IMR-90 (cell line): ENCODE measurements at regions of chr2 and their contacts with region 1.

Region 1: GRCh38 chr2:72887754-72888437 is 688 bp downstream of the SPR start:
- DNase-seq: peak; percentile 84
- ATAC-seq: peak; percentile 78
- H3K4me3 ChIP-seq: peak overlapping the region; percentile 62
- H3K27ac ChIP-seq: peak overlapping the region; percentile 31; the same call in 1 of the 2 replicates
- H3K4me1 ChIP-seq: peaks cover 3% of the 10 kb centered on the region; the same call in 1 of the 2 replicates
- H3K27me3 ChIP-seq: no peaks in the 10 kb centered on the region
- CTCF ChIP-seq: peak; percentile 96
- POLR2A ChIP-seq: no peak
- RAD21 ChIP-seq: peak; percentile 54

Region 2: GRCh38 chr2:71018625-71019024 is 1869.3 kb before region 1 on chr2:
- CTCF ChIA-PET with region 1: no interaction called
- POLR2A ChIA-PET with region 1: no interaction called
- dilution Hi-C with region 1: no loop called
- in situ Hi-C with region 1: no loop called
- intact Hi-C with region 1: no loop called
- DNase-seq: no peak
- ATAC-seq: no peak
- H3K4me3 ChIP-seq: no peak overlapping the region
- H3K27ac ChIP-seq: no peak overlapping the region
- H3K4me1 ChIP-seq: no peaks in the 10 kb centered on the region
- H3K27me3 ChIP-seq: no peaks in the 10 kb centered on the region
- CTCF ChIP-seq: no peak
- POLR2A ChIP-seq: no peak
- RAD21 ChIP-seq: no peak

Region 3: DNA sequence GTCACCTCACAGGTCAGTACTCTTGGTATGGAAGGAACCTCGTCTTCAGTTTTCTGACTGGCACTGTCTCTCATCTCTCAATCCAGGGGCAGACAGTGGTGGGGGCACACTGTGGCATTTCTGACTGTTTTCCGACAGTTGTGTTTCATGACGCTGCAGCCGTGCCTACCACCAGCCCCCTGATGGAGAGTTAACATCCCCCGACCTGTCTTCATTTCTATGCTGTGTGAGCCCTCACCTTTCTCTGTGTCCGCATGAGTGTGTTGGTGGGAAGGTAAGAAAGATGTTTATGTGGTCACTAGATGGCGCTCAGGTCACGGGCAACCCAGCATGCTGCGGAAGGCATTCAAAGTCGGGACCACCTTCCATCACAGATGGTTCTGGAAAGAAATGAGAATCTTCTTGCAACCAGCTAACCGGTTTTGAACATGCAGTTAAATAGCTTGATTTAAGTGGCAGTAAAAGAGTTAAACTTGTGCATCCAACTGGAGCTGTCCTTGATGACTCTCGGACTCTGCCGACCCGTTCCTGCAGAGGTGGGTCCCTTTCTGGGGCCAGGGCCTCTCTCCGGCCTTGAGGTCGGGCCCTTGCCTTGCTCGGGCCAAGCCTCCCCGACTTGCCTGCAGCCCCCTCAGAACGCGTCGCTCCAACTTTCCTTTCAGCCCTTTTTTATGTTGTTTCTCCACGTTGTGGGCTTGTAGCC is 1342.2 kb before region 1 on chr2:
- CTCF ChIA-PET with region 1: interaction called, 3 read pairs
- POLR2A ChIA-PET with region 1: no interaction called
- dilution Hi-C with region 1: no loop called
- in situ Hi-C with region 1: loop called (anchors 25 kb)
- intact Hi-C with region 1: no loop called
- DNase-seq: peak; percentile 55
- ATAC-seq: peak; percentile 79
- H3K4me3 ChIP-seq: no peak overlapping the region
- H3K27ac ChIP-seq: no peak overlapping the region
- H3K4me1 ChIP-seq: no peaks in the 10 kb centered on the region
- H3K27me3 ChIP-seq: peaks cover 24% of the 10 kb centered on the region
- CTCF ChIP-seq: peak; percentile 82
- POLR2A ChIP-seq: no peak
- RAD21 ChIP-seq: peak; percentile 83

Region 4: GRCh38 chr2:72825241-72826155 is 62.4 kb before region 1 on chr2 and contains the start of gene EXOC6B:
- CTCF ChIA-PET with region 1: no interaction called
- POLR2A ChIA-PET with region 1: interaction called, 12 read pairs
- dilution Hi-C with region 1: no loop called
- in situ Hi-C with region 1: no loop called
- intact Hi-C with region 1: no loop called
- DNase-seq: peak; percentile 85
- ATAC-seq: peak; percentile 90
- H3K4me3 ChIP-seq: peak within 1 kb of the TSS; percentile 85
- H3K27ac ChIP-seq: peak within 1 kb of the TSS; percentile 74
- H3K4me1 ChIP-seq: peaks cover 12% of the 10 kb centered on the region
- H3K27me3 ChIP-seq: no peaks in the 10 kb centered on the region
- CTCF ChIP-seq: no peak
- POLR2A ChIP-seq: peak; percentile 71
- RAD21 ChIP-seq: no peak
- total RNA-seq, gene EXOC6B: 29.4 and 29.7 TPM in 2 replicates

Region 5: GRCh38 chr2:73071360-73072133 is 183.7 kb after region 1 on chr2 and contains the start of gene SFXN5:
- CTCF ChIA-PET with region 1: no interaction called
- POLR2A ChIA-PET with region 1: no interaction called
- dilution Hi-C with region 1: no loop called
- in situ Hi-C with region 1: loop called (anchors 5 kb)
- intact Hi-C with region 1: loop called (anchors 1 kb)
- DNase-seq: peak; percentile 93
- ATAC-seq: peak; percentile 92
- H3K4me3 ChIP-seq: peak within 1 kb of the TSS; percentile 82
- H3K27ac ChIP-seq: peak within 1 kb of the TSS; percentile 86
- H3K4me1 ChIP-seq: peaks cover 12% of the 10 kb centered on the region
- H3K27me3 ChIP-seq: no peaks in the 10 kb centered on the region
- CTCF ChIP-seq: peak; percentile 36
- POLR2A ChIP-seq: peak; percentile 54; the same call in 1 of the 2 replicates
- RAD21 ChIP-seq: no peak
- total RNA-seq, gene SFXN5: 8.3 and 8.6 TPM in 2 replicates

Region 6: DNA sequence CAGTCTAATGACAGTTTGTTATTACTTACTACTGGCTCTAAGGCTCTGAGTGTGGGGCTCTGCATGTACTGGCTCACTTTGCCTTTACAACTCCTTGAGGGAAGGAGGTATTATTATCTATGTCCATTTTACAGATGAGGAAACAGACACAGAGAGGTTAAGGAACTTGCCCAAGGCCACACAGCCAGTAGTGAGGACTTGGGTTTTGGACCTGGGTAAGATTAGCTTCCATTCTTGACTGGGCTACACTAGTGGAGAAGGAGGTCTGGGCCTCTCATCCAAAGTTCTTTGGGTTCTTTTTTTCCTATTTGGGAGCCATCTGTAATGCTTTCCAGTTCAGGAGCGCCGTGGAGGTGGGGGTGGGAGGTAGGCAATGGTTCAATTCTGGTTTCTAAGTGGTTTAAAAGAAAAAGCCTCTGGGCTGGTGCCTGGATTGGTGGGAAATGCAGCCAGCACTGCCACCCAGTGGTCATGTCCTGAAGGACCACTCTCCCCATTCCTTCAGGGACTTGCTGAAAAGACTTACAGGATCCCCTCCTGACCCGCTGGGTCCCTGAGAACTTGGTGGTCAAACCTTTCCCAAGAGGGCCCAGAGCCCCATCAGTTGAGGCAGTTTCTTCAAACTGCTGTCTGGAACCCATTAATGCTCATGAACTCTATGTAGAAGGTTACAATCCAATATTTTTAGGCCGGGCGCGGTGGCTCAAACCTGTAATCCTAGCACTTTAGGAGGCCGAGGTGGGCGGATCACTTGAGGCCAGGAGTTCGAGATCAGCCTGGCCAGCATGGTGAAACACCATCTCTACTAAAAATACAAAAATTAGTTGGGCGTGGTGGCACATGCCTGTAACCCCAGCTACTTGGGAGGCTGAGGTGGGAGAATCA is 275.8 kb after region 1 on chr2:
- CTCF ChIA-PET with region 1: interaction called, 6 read pairs
- POLR2A ChIA-PET with region 1: no interaction called
- dilution Hi-C with region 1: no loop called
- in situ Hi-C with region 1: loop called (anchors 5 kb)
- intact Hi-C with region 1: loop called (anchors 1 kb)
- DNase-seq: peak; percentile 74
- ATAC-seq: peak; percentile 98
- H3K4me3 ChIP-seq: no peak overlapping the region
- H3K27ac ChIP-seq: no peak overlapping the region
- H3K4me1 ChIP-seq: no peaks in the 10 kb centered on the region
- H3K27me3 ChIP-seq: peaks cover 21% of the 10 kb centered on the region
- CTCF ChIP-seq: peak; percentile 94
- POLR2A ChIP-seq: 0 out of 2 replicates have a peak, but pooled peaks have one; percentile 25
- RAD21 ChIP-seq: peak; percentile 95

Region 7: GRCh38 chr2:73212448-73213176 is 324.7 kb after region 1 on chr2:
- CTCF ChIA-PET with region 1: interaction called, 8 read pairs
- POLR2A ChIA-PET with region 1: no interaction called
- dilution Hi-C with region 1: no loop called
- in situ Hi-C with region 1: no loop called
- intact Hi-C with region 1: loop called (anchors 1 kb)
- DNase-seq: peak; percentile 87
- ATAC-seq: peak; percentile 70
- H3K4me3 ChIP-seq: no peak overlapping the region
- H3K27ac ChIP-seq: no peak overlapping the region
- H3K4me1 ChIP-seq: peaks cover 6% of the 10 kb centered on the region; the same call in 1 of the 2 replicates
- H3K27me3 ChIP-seq: peaks cover 10% of the 10 kb centered on the region
- CTCF ChIP-seq: peak; percentile 83
- POLR2A ChIP-seq: no peak
- RAD21 ChIP-seq: peak; percentile 61